Psoas muscle (tissue), 8 donors: ENCODE measurements at regions of chr15 and their contacts with region 1.

Region 1: GRCh38 chr15:68304589-68305337 is 27.2 kb downstream of the FEM1B start:
- DNase-seq: no peak
- ATAC-seq: no peak
- H3K4me3 ChIP-seq: no peak overlapping the region
- H3K27ac ChIP-seq: no peak overlapping the region
- H3K4me1 ChIP-seq: peaks cover 9% of the 10 kb centered on the region
- H3K27me3 ChIP-seq: no peaks in the 10 kb centered on the region
- CTCF ChIP-seq: no peak

Region 2: DNA sequence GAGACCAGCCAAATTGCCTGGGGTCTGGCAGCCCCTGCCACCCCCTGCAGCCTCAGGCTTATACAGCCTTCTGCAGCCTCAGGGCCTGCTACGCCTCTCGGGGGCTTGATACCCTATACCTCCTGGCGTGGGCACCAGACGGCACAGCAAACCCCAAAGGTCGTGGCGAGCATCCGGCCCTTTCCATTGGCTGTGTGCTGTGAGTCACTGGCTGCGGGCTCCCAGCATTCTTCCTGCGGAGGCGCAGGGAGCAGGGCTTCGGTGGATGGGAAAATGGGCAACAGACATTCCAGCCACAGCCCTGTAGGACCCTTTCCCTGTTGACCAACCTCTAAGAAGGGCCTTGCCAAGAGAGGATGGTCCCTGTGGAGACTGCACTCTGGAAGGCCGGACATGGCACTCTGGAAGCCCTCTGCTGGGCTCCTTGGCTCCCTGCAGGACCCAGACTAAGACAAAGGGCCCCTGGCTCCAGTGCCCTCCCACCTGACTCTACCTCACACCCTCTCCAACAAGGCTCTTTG is 67.6 kb after region 1 on chr15:
- intact Hi-C with region 1: loop called (anchors 2 to 5 kb)
- DNase-seq: no peak
- ATAC-seq: peak; percentile 52 to 77 (median 72)
- H3K4me3 ChIP-seq: no peak overlapping the region
- H3K27ac ChIP-seq: no peak overlapping the region
- H3K4me1 ChIP-seq: peaks cover 18% of the 10 kb centered on the region
- H3K27me3 ChIP-seq: no peaks in the 10 kb centered on the region
- CTCF ChIP-seq: peak; percentile 45

Region 3: DNA sequence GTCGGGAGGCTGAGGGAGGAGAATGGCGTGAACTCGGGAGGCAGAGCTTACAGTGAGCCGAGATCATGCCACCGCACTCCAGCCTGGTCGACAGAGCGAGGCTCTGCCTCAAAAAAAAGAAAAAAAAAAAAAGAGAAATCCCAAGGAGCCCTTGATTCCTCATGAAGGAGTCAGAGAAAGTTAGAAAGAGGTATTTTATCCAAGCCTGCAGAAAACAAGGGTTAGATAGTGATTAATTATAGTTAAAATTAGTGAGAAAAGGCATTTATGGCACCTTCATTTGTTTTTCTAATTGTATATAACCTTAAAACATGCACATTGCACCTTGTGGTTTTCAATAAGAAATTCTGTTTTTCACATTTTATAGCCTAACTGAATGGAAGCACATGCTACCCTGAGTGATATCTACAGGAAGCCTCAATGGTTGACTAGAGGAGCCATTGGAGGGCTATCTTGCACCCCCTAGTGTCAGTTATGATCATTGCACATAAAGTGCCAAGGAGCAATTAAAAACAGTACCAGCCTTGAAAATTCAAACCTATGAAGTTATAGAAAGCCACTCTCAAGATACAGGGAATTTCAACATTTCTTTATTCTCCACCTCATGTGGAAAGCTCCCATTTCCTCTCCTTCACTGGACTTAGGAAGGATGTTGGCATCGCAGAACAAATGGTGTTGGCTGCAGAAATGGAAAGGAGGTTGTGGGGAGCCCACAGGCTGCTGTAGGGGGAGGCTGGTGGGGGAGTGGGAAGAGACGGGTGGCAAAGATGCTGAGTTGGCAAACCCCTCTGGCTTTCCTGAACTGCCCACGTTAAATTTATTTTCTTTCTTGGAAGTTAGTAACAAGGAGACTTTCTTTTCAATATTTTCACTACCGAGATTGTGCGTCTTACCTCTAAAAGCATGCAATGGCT is 78.7 kb after region 1 on chr15:
- intact Hi-C with region 1: loop called (anchors 2 to 5 kb)
- DNase-seq: no peak
- ATAC-seq: peak; percentile 48 to 77 (median 60)
- H3K4me3 ChIP-seq: no peak overlapping the region
- H3K27ac ChIP-seq: no peak overlapping the region
- H3K4me1 ChIP-seq: no peaks in the 10 kb centered on the region
- H3K27me3 ChIP-seq: peaks cover 0 to 4% (median 0%) of the 10 kb centered on the region in 3 donors
- CTCF ChIP-seq: peak; percentile 74

Region 4: GRCh38 chr15:68550481-68551295 is 245.9 kb after region 1 on chr15:
- intact Hi-C with region 1: loop called in 1 of 2 experiments (anchors 1 kb)
- DNase-seq: peak; percentile 63 to 80
- ATAC-seq: peak in 3 of 4 donors; percentile 46 to 76 (median 58)
- H3K4me3 ChIP-seq: no peak overlapping the region
- H3K27ac ChIP-seq: no peak overlapping the region
- H3K4me1 ChIP-seq: no peaks in the 10 kb centered on the region
- H3K27me3 ChIP-seq: peaks cover 0 to 5% (median 0%) of the 10 kb centered on the region in 3 donors
- CTCF ChIP-seq: peak; percentile 95